ENCODE measurements at regions of chr16 and their contacts with region 1.

Region 1: GRCh38 chr16:75647492-75648264 is at the starts of genes KARS1 and TERF2IP:
- DNase-seq: peak; percentile 94
- H3K4me3 Mint-ChIP-seq: peak within 1 kb of the TSS; percentile 96
- H3K27ac Mint-ChIP-seq: peak within 1 kb of the TSS; percentile 96
- H3K4me1 Mint-ChIP-seq: peaks cover 48% of the 10 kb centered on the region
- H3K27me3 Mint-ChIP-seq: no peaks in the 10 kb centered on the region
- total RNA-seq, gene KARS1: 256 and 269 TPM in 2 replicates
- total RNA-seq, gene TERF2IP: 73.6 and 77.6 TPM in 2 replicates

Region 2: GRCh38 chr16:74296432-74297144 is 1351.1 kb before region 1 on chr16 and contains the start of gene PSMD7:
- intact Hi-C with region 1: loop called (anchors 5 kb)
- DNase-seq: peak; percentile 87
- H3K4me3 Mint-ChIP-seq: peak within 1 kb of the TSS; percentile 84
- H3K27ac Mint-ChIP-seq: peak within 1 kb of the TSS; percentile 90
- H3K4me1 Mint-ChIP-seq: peaks cover 20% of the 10 kb centered on the region
- H3K27me3 Mint-ChIP-seq: no peaks in the 10 kb centered on the region
- total RNA-seq, gene PSMD7: 164 and 170 TPM in 2 replicates

Region 3: DNA sequence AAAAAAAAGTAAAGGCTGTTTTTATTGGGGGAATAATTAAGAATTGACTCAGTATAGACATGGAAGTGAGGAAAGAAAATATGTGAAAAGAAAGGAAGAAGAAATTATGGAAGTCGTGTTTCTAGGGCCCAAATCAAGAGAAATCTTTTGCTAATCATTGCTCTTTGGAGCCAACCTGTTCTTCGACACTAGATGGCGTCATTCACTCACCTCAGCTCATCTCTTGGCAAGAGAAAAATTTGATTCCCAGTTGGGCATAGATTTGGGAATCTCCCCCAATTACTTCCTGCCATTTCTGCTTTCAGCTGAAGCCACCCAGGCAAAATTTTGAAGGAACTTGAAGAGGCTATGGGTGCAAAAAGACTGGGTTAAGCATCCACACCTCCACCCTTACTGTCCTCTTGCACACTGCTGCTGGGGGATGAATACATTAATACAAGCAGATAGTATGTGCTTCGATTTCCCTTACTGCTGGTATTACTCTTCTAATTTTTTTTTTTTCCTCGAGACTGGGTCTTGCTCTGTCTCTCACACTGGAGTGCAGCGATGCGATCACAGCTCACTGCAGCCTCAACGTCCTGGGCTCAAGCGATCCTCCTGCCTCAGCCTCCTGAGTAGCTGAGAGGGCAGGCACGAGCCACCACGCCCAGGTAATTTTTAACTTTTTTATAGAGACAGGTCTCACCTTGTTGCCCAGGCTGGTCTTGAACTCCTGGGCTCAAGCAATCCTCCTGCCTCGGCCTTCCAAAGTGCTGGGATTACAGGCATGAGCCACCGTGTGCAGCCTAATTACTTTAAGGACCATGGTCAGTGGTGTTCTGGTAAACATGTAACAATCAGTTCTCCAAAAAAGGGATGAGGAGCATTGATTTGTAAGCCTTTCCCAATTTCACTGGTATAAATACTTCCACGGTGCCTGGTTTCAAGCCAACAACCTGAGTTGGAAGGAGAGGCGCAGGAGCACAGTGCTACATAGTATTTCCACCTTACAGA is 1337.6 kb before region 1 on chr16:
- intact Hi-C with region 1: no loop called
- DNase-seq: no peak
- H3K4me3 Mint-ChIP-seq: no peak overlapping the region
- H3K27ac Mint-ChIP-seq: peak overlapping the region; percentile 28
- H3K4me1 Mint-ChIP-seq: peaks cover 4% of the 10 kb centered on the region
- H3K27me3 Mint-ChIP-seq: no peaks in the 10 kb centered on the region

Region 4: GRCh38 chr16:74666425-74667254 is 981.0 kb before region 1 on chr16 and contains the start of gene RFWD3:
- intact Hi-C with region 1: loop called (anchors 5 kb)
- DNase-seq: peak; percentile 95
- H3K4me3 Mint-ChIP-seq: peak within 1 kb of the TSS; percentile 91
- H3K27ac Mint-ChIP-seq: peak within 1 kb of the TSS; percentile 86
- H3K4me1 Mint-ChIP-seq: peaks cover 37% of the 10 kb centered on the region
- H3K27me3 Mint-ChIP-seq: no peaks in the 10 kb centered on the region
- total RNA-seq, gene RFWD3: 94.5 and 101 TPM in 2 replicates

Region 5: GRCh38 chr16:75251280-75252048 is 396.2 kb before region 1 on chr16 and contains the start of gene BCAR1:
- intact Hi-C with region 1: no loop called
- DNase-seq: no peak
- H3K4me3 Mint-ChIP-seq: no peak within 1 kb of the TSS
- H3K27ac Mint-ChIP-seq: no peak within 1 kb of the TSS
- H3K4me1 Mint-ChIP-seq: no peaks in the 10 kb centered on the region
- H3K27me3 Mint-ChIP-seq: peaks cover 56% of the 10 kb centered on the region
- total RNA-seq, gene BCAR1: 0.44 and 0.59 TPM in 2 replicates

Region 6: DNA sequence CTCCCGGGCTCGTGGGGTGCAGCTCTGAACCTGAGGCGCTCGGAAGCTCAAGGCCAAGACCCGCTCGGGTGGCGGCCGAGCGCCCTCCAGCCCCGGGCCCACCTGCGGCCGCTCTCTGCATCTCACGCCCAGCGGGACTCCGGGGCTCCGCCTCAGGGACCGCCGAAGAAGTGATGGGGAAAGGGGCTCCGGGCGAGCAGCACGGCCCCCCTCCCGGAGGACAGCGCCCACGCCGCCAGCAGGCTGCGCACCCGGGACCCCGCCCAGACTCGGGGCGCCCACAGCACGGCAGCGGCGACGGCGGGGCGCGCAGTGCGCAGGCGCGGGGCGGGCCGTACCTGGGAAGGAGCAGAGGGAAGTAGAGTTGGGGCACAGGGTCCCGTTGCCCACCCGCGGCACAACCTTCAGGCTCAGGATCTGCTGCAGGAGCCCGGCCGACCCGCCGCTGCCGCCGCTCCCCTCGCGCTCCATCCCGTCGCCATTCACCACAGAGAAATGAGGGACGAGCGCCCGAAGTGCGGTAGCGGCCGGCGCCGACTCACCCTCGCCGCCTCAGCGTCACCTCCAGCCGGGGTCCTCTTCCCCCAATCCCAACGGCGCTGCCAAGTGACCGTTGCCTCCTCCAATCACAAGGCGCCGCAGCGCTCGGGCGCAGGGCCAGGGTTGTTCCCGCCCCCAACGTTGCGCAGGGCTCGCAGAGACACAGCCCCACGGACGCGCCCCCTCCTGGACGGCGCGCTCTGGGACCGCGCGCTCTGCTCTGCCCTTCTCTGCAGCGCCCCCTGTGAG is 183.4 kb before region 1 on chr16 and contains the start of gene TMEM170A:
- intact Hi-C with region 1: loop called (anchors 1 kb)
- DNase-seq: peak; percentile 98
- H3K4me3 Mint-ChIP-seq: peak within 1 kb of the TSS; percentile 91
- H3K27ac Mint-ChIP-seq: peak within 1 kb of the TSS; percentile 89
- H3K4me1 Mint-ChIP-seq: peaks cover 36% of the 10 kb centered on the region
- H3K27me3 Mint-ChIP-seq: peaks cover 2% of the 10 kb centered on the region
- total RNA-seq, gene TMEM170A: 35.6 and 39.9 TPM in 2 replicates

Region 7: DNA sequence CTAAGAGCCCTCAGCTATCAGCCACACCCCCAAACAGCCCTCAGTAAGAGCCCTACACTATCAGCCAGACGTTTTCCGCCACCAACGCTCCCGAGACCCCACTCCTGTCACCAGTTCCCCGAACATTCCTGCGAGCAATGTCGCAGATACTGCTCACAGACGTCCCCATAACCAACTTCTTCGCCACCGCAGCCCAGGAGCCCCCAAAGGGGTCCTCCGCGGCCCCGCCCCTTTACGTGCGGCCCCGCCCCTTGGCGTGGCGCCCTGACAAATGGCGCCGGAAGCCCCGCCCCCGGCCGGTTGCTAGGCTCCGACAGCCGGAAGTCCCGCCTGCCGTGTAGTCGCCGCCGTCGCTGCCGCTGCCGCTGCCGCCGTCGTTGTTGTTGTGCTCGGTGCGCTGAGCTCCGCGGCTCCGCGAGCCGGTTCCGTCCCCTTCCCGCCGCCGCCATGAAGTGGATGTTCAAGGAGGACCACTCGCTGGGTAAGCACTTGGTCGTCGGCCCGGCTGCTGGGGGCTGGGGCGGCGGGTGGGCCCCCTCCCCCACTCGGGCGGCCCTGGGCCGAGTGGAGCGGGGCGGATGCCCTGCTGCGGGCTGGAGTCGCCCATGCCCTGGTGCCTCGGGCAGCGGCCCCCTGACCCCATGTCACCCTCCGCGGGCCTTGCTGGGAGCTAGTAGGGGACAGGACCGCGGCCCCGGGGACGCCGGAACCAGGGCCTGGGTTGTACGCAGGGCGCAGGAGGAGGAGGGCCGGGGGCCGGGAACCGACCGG is 81.5 kb before region 1 on chr16 and contains the start of gene GABARAPL2:
- intact Hi-C with region 1: loop called (anchors 2 kb)
- DNase-seq: peak; percentile 86
- H3K4me3 Mint-ChIP-seq: peak within 1 kb of the TSS; percentile 96
- H3K27ac Mint-ChIP-seq: peak within 1 kb of the TSS; percentile 90
- H3K4me1 Mint-ChIP-seq: peaks cover 25% of the 10 kb centered on the region
- H3K27me3 Mint-ChIP-seq: peaks cover 14% of the 10 kb centered on the region
- total RNA-seq, gene GABARAPL2: 69.2 and 69.4 TPM in 2 replicates

Region 8: DNA sequence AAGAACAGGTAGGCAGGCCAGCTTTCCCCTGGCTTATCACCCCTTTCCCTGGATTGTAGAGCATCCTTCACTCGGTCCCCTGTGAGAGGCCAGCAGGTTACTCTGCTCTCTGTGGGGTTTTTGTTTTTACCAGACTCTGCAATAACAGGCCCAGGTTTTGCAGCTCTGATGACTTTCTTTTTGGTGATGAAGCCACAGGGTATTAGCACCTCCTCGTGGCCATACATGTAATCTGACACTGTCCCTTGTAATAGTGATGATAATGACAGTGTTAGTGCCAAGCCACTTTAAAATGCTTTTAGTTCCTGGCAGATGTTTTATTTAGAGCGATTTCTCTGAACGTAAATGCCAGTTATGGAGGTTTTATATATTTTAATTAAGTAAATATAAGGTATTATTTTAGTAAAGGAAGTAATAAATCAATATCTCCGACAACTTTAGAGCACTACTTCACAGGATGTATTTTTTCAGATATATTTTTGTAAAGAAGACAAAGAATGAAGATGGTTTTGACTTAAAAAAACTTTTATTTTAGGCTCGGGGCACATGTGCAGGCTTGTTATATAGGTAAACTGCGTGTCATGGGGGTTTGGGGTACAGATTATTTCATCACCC is 116.6 kb after region 1 on chr16:
- intact Hi-C with region 1: loop called (anchors 2 kb)
- DNase-seq: peak; percentile 33
- H3K4me3 Mint-ChIP-seq: no peak overlapping the region
- H3K27ac Mint-ChIP-seq: no peak overlapping the region
- H3K4me1 Mint-ChIP-seq: peaks cover 5% of the 10 kb centered on the region
- H3K27me3 Mint-ChIP-seq: peaks cover 6% of the 10 kb centered on the region

Measured in activated T-helper 2 cell treated with anti-CD3 and anti-CD28 coated beads, Interferon-gamma antibody, Interleukin-2, Interleukin-4, amounts not matched to agents 10 μg/mL and 5 μg/mL and 100 μg/mL, durations not matched to agents 14 hours and 24 hours and 36 hours (primary cell).